Dorsolateral prefrontal cortex (tissue), 120 donors: ENCODE measurements at regions of chr3 and their contacts with region 1.

Region 1: GRCh38 chr3:14651440-14652251 is at the start of gene CCDC174:
- DNase-seq: peak; percentile 86 to 98 (median 94)
- H3K4me3 ChIP-seq: peak within 1 kb of the TSS; percentile 65 to 99 (median 87)
- H3K27ac ChIP-seq: peak within 1 kb of the TSS; percentile 46 to 94 (median 86)
- H3K27me3 ChIP-seq: no peaks in the 10 kb centered on the region
- CTCF ChIP-seq: peak in 45 of 56 donors; percentile 7 to 65 (median 35)
- total RNA-seq, gene CCDC174: 15.8 to 38.0 (median 23.4) TPM

Region 2: DNA sequence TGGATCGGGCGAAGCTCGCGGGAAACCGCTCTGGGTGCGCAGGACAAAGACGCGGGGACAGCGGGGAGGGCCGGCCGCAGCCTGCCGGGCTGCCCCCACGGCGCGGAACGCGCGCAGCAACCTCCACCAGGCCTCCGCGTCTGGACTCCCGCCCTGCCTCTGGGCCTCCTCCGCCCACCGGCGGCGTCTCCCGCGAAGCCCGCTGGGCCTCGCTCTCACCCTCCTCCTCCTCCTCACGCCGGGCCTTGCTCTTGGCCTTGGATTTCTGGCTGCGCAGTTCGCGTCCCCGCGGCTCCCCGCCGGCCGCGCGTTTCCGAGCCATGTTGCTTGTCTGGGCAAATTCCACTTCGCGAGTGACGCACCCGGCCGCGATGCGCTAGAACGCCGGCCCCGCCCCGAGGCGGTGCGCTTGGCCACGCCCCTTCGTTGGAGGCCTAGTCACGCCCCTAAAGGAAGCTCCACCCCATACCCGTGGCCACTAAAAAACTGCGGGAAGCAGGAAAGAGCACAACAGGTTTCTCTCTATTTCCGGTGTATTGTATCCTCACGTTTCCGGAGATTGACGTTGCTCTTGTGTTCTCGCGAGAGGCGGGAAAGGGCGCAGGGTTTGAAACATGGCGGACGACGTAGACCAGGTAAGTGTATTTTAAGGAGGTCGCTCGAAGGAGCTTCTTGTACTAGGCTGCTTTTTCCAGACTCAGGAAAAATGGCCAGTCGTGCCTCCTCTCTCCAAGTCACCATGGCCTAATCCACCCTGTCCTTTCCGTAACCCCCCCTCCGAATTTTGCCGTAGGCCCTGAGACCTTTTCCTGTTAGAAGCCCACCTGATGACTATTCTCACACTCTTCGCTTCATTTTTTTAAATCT is 473.2 kb before region 1 on chr3 and contains the starts of genes LSM3 and XPC:
- intact Hi-C with region 1: loop called in 1 of 2 experiments (anchors 5 kb)
- DNase-seq: peak; percentile 96 to 99 (median 98)
- H3K4me3 ChIP-seq: peak within 1 kb of the TSS; percentile 53 to 99 (median 90)
- H3K27ac ChIP-seq: peak within 1 kb of the TSS; percentile 43 to 98 (median 92)
- H3K27me3 ChIP-seq: no peaks in the 10 kb centered on the region
- CTCF ChIP-seq: peak in 14 of 56 donors; percentile 2 to 53 (median 22)
- total RNA-seq, gene LSM3: 4.4 to 10.8 (median 7.8) TPM
- total RNA-seq, gene XPC: 19.9 to 57.4 (median 32.1) TPM

Region 3: GRCh38 chr3:15098503-15099363 is 447.1 kb after region 1 on chr3 and contains the start of gene RBSN:
- intact Hi-C with region 1: loop called (anchors 5 to 10 kb)
- DNase-seq: peak; percentile 92 to 97 (median 96)
- H3K4me3 ChIP-seq: peak within 1 kb of the TSS; percentile 70 to 99 (median 90)
- H3K27ac ChIP-seq: peak within 1 kb of the TSS in 57 of 59 donors; percentile 27 to 95 (median 87)
- H3K27me3 ChIP-seq: no peaks in the 10 kb centered on the region
- CTCF ChIP-seq: peak in 27 of 56 donors; percentile 11 to 52 (median 32)
- total RNA-seq, gene RBSN: 39.4 to 74.3 (median 61.4) TPM

Region 4: GRCh38 chr3:15108082-15108545 is 456.5 kb after region 1 on chr3:
- intact Hi-C with region 1: loop called in 1 of 2 experiments (anchors 10 kb)
- DNase-seq: peak; percentile 60 to 88 (median 74)
- H3K4me3 ChIP-seq: peak overlapping the region in 10 of 59 donors; percentile 9 to 38 (median 23)
- H3K27ac ChIP-seq: no peak overlapping the region
- H3K27me3 ChIP-seq: no peaks in the 10 kb centered on the region
- CTCF ChIP-seq: peak; percentile 66 to 94 (median 88)